ENCODE measurements at regions of chr4 and their contacts with region 1.

Region 1: DNA sequence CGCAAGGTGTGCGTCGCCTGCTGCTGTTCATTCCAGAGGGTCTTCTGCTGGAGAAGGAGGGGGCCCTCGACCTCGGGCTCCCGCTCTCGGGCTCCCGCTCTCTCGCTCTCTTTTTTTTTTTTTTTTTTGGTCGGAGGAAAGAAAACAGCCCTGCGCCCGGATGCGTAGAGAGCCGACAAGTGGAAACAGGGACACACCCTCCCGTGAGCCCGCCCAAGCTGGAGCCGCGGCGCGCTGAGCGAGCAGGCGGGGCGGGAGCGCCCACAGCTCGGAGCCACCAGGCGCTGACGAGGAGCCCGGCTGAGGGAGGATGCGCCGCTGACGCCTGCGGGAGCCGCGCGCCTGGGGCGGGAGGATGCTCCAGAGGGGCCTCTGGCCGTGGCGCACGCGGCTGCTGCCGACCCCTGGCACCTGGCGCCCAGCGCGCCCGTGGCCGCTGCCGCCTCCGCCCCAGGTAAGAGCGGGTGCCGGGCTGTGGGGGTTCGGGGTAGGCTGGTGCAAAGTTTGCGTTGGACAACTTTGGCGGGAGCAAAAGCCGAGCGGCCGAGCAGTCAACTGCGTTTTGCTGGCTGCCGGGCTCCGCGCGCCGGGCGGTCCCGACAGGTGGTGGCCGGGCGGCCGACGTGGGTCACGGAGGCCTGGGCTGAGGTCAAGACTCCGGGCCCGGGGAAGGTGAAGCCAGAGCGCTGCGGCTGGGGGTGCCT is at the start of gene MCUB:
- DNase-seq: peak; percentile 95
- H3K4me3 Mint-ChIP-seq: peak within 1 kb of the TSS; percentile 84
- H3K27ac Mint-ChIP-seq: peak within 1 kb of the TSS; percentile 92
- H3K4me1 Mint-ChIP-seq: peaks cover 52% of the 10 kb centered on the region
- H3K27me3 Mint-ChIP-seq: no peaks in the 10 kb centered on the region
- total RNA-seq, gene MCUB: 76.7 to 80.5 TPM

Region 2: GRCh38 chr4:109497511-109497910 is 62.6 kb before region 1 on chr4:
- CTCF ChIA-PET with region 1: no interaction called
- POLR2A ChIA-PET with region 1: no interaction called
- intact Hi-C with region 1: no loop called
- DNase-seq: no peak
- H3K4me3 Mint-ChIP-seq: no peak overlapping the region
- H3K27ac Mint-ChIP-seq: no peak overlapping the region
- H3K4me1 Mint-ChIP-seq: peaks cover 3% of the 10 kb centered on the region
- H3K27me3 Mint-ChIP-seq: no peaks in the 10 kb centered on the region

Region 3: DNA sequence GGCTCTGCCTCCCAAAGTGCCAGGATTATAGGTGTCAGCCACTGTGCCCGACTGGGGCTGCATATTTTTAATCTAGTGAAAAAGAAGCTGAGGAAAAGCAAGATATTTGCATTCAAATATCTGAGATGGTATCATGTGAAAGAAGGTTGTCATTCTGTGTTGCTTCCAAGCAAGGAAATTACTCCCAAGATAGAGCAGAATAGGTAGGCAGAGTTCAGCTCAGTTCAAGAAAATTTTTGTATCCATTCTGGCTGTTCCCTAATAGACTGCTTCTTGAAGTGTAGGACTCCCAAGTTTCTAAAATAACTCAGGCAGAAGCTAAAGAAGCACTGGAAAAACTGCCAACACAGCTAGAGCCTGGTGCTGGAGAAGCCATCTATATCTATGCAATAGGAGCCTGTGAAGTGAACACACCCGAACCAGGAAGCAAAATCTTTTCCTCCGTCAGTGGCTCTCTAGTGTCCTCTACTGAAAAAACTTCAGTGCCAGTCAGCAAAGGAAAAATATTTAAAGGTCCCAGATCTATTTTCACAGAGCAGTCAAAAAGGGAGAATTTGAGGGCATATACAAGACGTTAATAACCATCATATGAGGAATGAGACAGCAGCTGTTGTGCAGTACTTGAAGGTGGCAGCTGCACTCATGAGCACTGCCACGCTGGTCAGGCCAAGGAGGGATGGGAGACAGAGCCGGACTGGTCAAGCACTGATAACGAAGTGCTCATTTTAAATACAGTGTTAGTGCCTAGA is 14.1 kb after region 1 on chr4:
- CTCF ChIA-PET with region 1: interaction called, 4 read pairs
- POLR2A ChIA-PET with region 1: interaction called, 13 read pairs
- intact Hi-C with region 1: loop called (anchors 1 kb)
- DNase-seq: no peak
- H3K4me3 Mint-ChIP-seq: peak overlapping the region; percentile 7
- H3K27ac Mint-ChIP-seq: no peak overlapping the region
- H3K4me1 Mint-ChIP-seq: peaks cover 66% of the 10 kb centered on the region
- H3K27me3 Mint-ChIP-seq: no peaks in the 10 kb centered on the region

Region 4: GRCh38 chr4:109648266-109648996 is 88.3 kb after region 1 on chr4:
- CTCF ChIA-PET with region 1: no interaction called
- POLR2A ChIA-PET with region 1: interaction called, 3 read pairs
- intact Hi-C with region 1: loop called (anchors 1 kb)
- DNase-seq: no peak
- H3K4me3 Mint-ChIP-seq: peak overlapping the region; percentile 41
- H3K27ac Mint-ChIP-seq: peak overlapping the region; percentile 76
- H3K4me1 Mint-ChIP-seq: peaks cover 42% of the 10 kb centered on the region
- H3K27me3 Mint-ChIP-seq: no peaks in the 10 kb centered on the region

Region 5: DNA sequence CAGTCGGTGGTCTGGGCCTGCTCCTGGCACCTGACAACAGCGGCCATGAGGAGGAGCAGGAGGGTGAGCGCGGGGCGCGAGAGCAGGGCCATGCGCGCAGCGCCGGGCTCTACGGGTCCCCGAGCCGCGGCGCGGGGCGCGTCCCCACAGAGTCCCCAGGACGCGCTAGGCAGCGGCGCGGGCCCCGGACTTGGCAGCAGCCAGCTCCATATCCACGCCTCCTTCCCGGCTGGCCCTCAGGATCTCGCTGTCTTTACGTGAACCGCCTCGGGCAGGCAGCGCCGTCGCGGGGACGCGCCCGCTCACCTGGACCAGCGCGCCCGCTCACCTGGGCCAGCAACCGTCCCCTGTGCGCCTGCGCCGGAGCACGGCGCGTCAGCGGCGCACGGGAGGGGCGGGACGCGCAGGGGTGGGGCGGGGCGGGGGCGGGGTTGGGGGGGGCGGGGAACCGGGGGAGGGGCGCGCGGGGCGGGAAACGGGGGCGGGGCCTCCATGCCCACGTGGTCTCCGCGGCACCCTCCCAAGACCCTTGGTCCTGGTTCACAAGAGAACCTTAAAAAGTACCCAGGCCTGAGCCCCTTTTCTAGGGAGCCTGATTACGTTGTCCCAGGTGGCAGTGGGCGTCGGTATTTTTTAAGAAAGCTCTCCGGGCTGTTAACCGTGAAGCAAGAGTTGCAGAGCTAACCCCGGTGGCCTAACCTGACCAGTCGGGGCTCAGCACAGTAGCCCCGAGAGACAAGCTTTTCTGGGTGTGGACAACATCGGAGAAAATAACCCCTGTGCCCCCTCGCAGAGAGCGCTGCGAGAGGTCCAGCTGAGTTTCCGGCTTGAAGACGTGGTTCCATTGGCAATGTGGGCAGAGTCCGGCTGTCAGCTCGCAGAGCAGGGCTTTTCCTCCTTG is 169.8 kb after region 1 on chr4 and contains the start of gene PLA2G12A:
- CTCF ChIA-PET with region 1: no interaction called
- POLR2A ChIA-PET with region 1: interaction called, 16 read pairs
- intact Hi-C with region 1: loop called (anchors 1 kb)
- DNase-seq: peak; percentile 79
- H3K4me3 Mint-ChIP-seq: peak within 1 kb of the TSS; percentile 82
- H3K27ac Mint-ChIP-seq: peak within 1 kb of the TSS; percentile 55
- H3K4me1 Mint-ChIP-seq: peaks cover 9% of the 10 kb centered on the region
- H3K27me3 Mint-ChIP-seq: no peaks in the 10 kb centered on the region
- total RNA-seq, gene PLA2G12A: 17.9 to 21.6 TPM

Region 6: DNA sequence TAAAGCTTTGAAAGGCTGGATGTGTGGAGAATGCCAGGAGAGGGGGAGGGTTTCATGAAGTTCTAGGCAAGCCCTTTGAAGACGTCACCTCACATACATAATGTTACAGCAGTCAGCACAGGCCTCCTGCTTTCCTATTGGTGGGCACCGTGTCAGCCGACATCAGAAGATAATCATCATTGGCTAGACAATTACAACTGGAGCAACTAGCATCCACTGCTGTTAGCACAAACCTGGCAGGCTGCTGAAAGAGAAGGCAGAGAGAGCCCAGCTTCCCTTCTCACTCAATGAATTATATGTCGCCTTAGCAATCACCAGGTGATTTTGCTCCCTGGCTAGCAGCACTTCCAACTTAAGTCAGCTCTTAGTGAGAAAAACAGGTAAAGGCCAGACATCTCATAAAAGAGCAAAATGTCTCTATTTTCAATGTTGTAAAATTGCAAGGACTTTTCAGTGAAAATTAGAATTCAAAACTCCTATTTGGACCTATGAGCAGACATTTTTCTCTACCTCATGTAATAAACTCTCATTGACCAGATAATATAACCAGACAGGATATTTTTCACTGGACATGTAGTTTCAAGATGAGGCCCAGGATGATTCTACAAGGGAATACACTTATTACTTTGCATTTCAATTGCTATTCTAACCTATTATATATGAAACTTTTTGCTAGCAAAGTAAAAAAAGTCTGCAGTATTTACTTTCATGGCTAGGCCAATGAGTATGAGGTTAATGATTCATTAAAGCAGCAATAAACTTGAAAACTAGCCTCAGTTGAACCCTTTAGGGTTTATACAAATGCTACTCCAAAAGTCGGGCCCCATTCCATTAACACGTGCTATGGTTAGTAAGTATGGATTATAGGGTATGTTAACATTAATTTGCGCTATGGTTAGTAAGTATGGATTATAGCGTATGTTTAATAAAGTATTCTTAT is 634.0 kb after region 1 on chr4:
- CTCF ChIA-PET with region 1: no interaction called
- POLR2A ChIA-PET with region 1: no interaction called
- intact Hi-C with region 1: loop called (anchors 10 kb)
- DNase-seq: peak; percentile 89
- H3K4me3 Mint-ChIP-seq: peak overlapping the region; percentile 59
- H3K27ac Mint-ChIP-seq: peak overlapping the region; percentile 93
- H3K4me1 Mint-ChIP-seq: peaks cover 20% of the 10 kb centered on the region
- H3K27me3 Mint-ChIP-seq: no peaks in the 10 kb centered on the region

Region 7: GRCh38 chr4:110361921-110362320 is 801.8 kb after region 1 on chr4:
- CTCF ChIA-PET with region 1: no interaction called
- POLR2A ChIA-PET with region 1: no interaction called
- intact Hi-C with region 1: no loop called
- DNase-seq: no peak
- H3K4me3 Mint-ChIP-seq: no peak overlapping the region
- H3K27ac Mint-ChIP-seq: no peak overlapping the region
- H3K4me1 Mint-ChIP-seq: no peaks in the 10 kb centered on the region
- H3K27me3 Mint-ChIP-seq: peaks cover 2% of the 10 kb centered on the region

Measured in activated CD4-positive, alpha-beta memory T cell treated with anti-CD3 and anti-CD28 coated beads for 36 hours (primary cell).